ENCODE measurements at regions of chr7 and their contacts with region 1.

Region 1: GRCh38 chr7:77812290-77812685 is 13.7 kb downstream of the PHTF2 start:
- DNase-seq: no peak
- H3K4me3 ChIP-seq: no peak overlapping the region
- H3K27ac ChIP-seq: no peak overlapping the region
- H3K4me1 ChIP-seq: no peaks in the 10 kb centered on the region
- H3K27me3 ChIP-seq: no peaks in the 10 kb centered on the region
- CTCF ChIP-seq: no peak

Region 2: DNA sequence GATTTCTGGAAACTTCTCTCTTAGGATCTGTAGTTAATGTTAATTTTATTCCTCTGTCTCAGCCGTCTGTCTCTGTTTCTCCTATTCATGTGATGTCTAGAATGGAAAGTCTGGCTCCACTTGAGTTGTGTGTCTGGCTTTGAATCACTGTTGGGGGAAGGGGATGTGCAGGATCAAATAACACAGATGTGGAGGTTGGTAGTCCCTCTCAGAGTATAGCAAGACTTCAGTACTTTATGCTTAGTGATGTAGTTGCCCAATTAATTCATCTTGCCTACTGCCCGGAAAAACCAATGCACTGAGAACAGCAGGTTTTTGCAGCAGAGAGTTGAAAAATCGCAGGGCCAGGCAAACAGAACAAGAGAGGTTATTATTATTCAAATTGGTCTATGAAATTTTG is 65.5 kb after region 1 on chr7:
- intact Hi-C with region 1: loop called (anchors 10 kb)
- DNase-seq: no peak
- H3K4me3 ChIP-seq: no peak overlapping the region
- H3K27ac ChIP-seq: no peak overlapping the region
- H3K4me1 ChIP-seq: no peaks in the 10 kb centered on the region
- H3K27me3 ChIP-seq: no peaks in the 10 kb centered on the region
- CTCF ChIP-seq: no peak